Stomach (tissue), 19 donors: ENCODE measurements at regions of chr10 and their contacts with region 1.

Region 1: GRCh38 chr10:80509403-80510161 is 28.1 kb upstream of the SH2D4B start:
- DNase-seq: no peak
- H3K4me3 ChIP-seq: no peak overlapping the region
- H3K27ac ChIP-seq: peak overlapping the region in 4 of 5 donors; percentile 12 to 58 (median 37)
- H3K4me1 ChIP-seq: peaks cover 16 to 48% (median 20%) of the 10 kb centered on the region in 4 donors
- H3K27me3 ChIP-seq: no peaks in the 10 kb centered on the region
- CTCF ChIP-seq: no peak
- EP300 ChIP-seq: no peak
- POLR2A ChIP-seq: no peak

Region 2: GRCh38 chr10:80444646-80445319 is 64.8 kb before region 1 on chr10:
- intact Hi-C with region 1: loop called (anchors 5 kb)
- DNase-seq: peak; percentile 63 to 89
- H3K4me3 ChIP-seq: no peak overlapping the region
- H3K27ac ChIP-seq: no peak overlapping the region
- H3K4me1 ChIP-seq: peaks cover 0 to 18% (median 2%) of the 10 kb centered on the region in 4 donors
- H3K27me3 ChIP-seq: no peaks in the 10 kb centered on the region
- CTCF ChIP-seq: peak in 5 of 7 experiments; percentile 31 to 82 (median 60)
- EP300 ChIP-seq: no peak
- POLR2A ChIP-seq: no peak

Region 3: GRCh38 chr10:80894797-80895467 is 385.4 kb after region 1 on chr10:
- intact Hi-C with region 1: no loop called
- DNase-seq: no peak
- H3K4me3 ChIP-seq: no peak overlapping the region
- H3K27ac ChIP-seq: no peak overlapping the region
- H3K4me1 ChIP-seq: no peaks in the 10 kb centered on the region
- H3K27me3 ChIP-seq: no peaks in the 10 kb centered on the region
- CTCF ChIP-seq: no peak
- EP300 ChIP-seq: no peak
- POLR2A ChIP-seq: no peak